GM12878 (cell line): ENCODE measurements at regions of chr11 and their contacts with region 1.

Region 1: GRCh38 chr11:129750349-129751292 is 65.0 kb upstream of the TMEM45B start:
- DNase-seq: no peak
- ATAC-seq: peak; percentile 99
- H3K4me3 ChIP-seq: no peak overlapping the region
- H3K27ac ChIP-seq: no peak overlapping the region
- H3K4me1 ChIP-seq: no peaks in the 10 kb centered on the region
- H3K27me3 ChIP-seq: no peaks in the 10 kb centered on the region; a peak in 1 of 4 replicates
- CTCF ChIP-seq: peak; percentile 96 to 99 (median 96)
- EP300 ChIP-seq: no peak
- POLR2A ChIP-seq: no peak
- RAD21 ChIP-seq: peak; percentile 75

Region 2: DNA sequence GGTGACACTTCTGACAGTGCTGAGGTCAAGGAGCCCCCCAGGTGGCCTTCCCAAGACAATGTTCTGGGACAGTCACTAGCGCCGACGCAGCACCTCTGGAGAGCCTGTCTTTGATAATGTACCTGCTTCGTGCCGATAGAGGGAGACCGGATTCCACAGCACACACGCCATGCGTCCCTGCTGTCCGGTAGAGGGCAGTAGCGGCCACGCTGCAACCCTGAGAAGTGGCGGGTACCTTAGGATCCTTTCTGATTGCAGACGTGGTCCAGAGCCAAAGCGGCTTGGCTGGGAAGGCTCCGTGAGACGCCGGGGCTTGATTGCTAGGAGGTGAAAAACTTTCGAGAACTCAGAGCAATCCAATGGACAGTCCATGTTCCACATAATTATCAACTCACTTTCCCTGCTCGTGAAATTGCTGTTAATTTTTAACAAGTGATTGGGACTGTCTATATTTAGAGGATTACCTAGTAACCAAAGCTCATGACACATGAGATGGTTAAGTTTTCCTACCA is 386.4 kb before region 1 on chr11:
- CTCF ChIA-PET with region 1: interaction called, 3 read pairs
- POLR2A ChIA-PET with region 1: no interaction called
- RAD21 ChIA-PET with region 1: no interaction called
- SMC1A ChIA-PET with region 1: interaction called, 3 read pairs
- in situ Hi-C with region 1: loop called (anchors 5 kb)
- intact Hi-C with region 1: loop called (anchors 1 kb)
- DNase-seq: peak; percentile 45
- ATAC-seq: peak; percentile 100
- H3K4me3 ChIP-seq: no peak overlapping the region
- H3K27ac ChIP-seq: no peak overlapping the region
- H3K4me1 ChIP-seq: no peaks in the 10 kb centered on the region
- H3K27me3 ChIP-seq: peaks cover 0 to 1% of the 10 kb centered on the region in 2 experiments; a peak in 1 of 4 replicates
- CTCF ChIP-seq: peak; percentile 100; a peak in 5 of 6 replicates
- EP300 ChIP-seq: no peak
- POLR2A ChIP-seq: no peak
- RAD21 ChIP-seq: peak; percentile 96